Activated CD8-positive, alpha-beta T cell treated with anti-CD3 and anti-CD28 coated beads, Interleukin-2, amount 10 ng/mL, durations not matched to agents 7 days and 5 days (primary cell): ENCODE measurements at regions of chr21 and their contacts with region 1.

Region 1: DNA sequence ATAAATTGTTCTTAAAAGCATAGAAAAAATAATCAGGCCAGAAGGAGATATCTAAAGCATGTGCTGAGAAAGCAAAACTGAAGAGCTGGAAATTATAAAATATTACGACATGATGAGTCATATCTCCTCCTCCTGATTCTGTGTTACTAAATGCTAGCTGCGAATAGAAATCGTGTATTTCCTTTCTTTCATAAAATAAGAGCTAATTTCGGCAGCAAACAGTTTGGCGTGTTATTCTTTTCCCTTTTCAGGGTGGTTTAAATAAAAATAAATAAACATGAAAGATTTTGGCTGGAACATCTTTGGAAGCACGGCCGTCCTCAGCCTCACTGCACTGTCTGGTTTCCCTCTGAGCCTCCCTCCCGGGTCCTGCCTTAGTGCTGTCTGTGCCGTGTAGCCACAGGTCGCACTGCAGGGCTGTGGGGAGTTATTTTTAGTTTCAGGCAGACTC is 56.0 kb downstream of the ADARB1 start:
- DNase-seq: no peak
- ATAC-seq: no peak
- H3K4me3 Mint-ChIP-seq: no peak overlapping the region
- H3K27ac Mint-ChIP-seq: no peak overlapping the region
- H3K4me1 Mint-ChIP-seq: peaks cover 21% of the 10 kb centered on the region
- H3K27me3 Mint-ChIP-seq: no peaks in the 10 kb centered on the region

Region 2: GRCh38 chr21:44949779-44950198 is 180.6 kb before region 1 on chr21:
- CTCF ChIA-PET with region 1: interaction called, 187 read pairs
- POLR2A ChIA-PET with region 1: interaction called, 4 read pairs
- DNase-seq: peak; percentile 87
- ATAC-seq: peak; percentile 92
- H3K4me3 Mint-ChIP-seq: no peak overlapping the region
- H3K27ac Mint-ChIP-seq: no peak overlapping the region
- H3K4me1 Mint-ChIP-seq: peaks cover 9% of the 10 kb centered on the region
- H3K27me3 Mint-ChIP-seq: no peaks in the 10 kb centered on the region

Region 3: DNA sequence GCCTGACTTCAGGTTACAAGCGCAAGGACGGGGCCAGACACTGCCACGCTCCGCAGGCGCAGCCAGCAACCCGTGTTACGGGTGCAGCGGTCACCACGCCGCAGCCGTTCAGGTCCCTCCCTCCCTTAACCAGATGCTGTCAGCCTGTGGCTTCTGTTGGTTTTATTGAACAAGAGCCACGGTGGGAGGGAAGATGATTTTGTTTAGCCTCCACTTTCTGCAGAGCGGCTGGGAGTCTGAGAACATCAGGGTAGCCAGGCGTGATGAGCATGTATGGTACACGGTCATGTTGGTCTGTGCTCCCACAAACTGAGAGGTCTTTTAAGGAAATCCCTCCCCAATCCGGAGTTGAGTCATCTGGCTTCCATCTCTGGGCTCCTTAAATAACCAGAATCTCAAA is 74.5 kb before region 1 on chr21:
- CTCF ChIA-PET with region 1: interaction called, 13 read pairs
- POLR2A ChIA-PET with region 1: interaction called, 3 read pairs
- DNase-seq: no peak
- ATAC-seq: no peak
- H3K4me3 Mint-ChIP-seq: no peak overlapping the region
- H3K27ac Mint-ChIP-seq: no peak overlapping the region
- H3K4me1 Mint-ChIP-seq: no peaks in the 10 kb centered on the region
- H3K27me3 Mint-ChIP-seq: peaks cover 27% of the 10 kb centered on the region

Region 4: GRCh38 chr21:45069711-45070542 is 60.4 kb before region 1 on chr21:
- CTCF ChIA-PET with region 1: interaction called, 12 read pairs
- POLR2A ChIA-PET with region 1: interaction called, 3 read pairs
- DNase-seq: no peak
- ATAC-seq: no peak
- H3K4me3 Mint-ChIP-seq: no peak overlapping the region
- H3K27ac Mint-ChIP-seq: no peak overlapping the region
- H3K4me1 Mint-ChIP-seq: peaks cover 6% of the 10 kb centered on the region
- H3K27me3 Mint-ChIP-seq: peaks cover 9% of the 10 kb centered on the region

Region 5: DNA sequence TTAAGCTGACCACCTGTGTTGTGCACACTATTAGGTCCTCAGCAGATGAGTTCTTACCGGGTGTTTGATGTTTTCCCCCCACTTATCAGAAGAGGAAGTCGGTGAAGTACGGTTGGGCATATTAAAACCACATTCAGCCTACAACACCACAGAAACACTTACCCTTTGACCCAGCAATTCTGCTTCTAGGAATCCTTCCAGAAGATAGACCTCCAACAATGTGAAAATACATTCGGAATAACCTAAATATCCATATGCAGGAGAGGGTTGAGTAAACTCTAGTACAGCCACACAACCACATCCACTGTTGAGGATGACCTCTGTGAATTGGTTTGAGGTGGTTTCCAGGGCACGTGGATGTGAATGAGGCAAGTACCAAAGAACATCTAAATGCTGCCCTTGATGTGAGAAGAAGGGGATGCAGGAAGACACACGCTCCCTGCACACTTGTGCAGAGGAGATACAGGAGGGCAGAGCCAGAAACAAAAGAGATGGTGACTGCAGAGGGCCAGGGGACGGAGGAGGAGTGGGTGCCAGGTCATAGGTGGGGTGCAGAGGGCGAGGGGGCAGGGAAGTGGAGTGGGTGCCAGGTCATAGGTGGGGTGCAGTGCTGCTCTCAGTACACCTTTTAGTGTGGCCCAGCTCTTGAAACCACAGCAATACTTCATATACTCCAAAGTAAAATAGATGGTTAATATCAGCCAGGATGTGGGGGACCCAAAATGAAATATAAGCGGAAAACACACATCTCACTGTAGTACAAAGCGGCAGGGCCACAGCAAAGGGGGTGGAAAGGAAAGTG is 43.1 kb before region 1 on chr21:
- CTCF ChIA-PET with region 1: interaction called, 10 read pairs
- POLR2A ChIA-PET with region 1: no interaction called
- DNase-seq: peak; percentile 72
- ATAC-seq: peak; percentile 59
- H3K4me3 Mint-ChIP-seq: peak overlapping the region; percentile 44
- H3K27ac Mint-ChIP-seq: peak overlapping the region; percentile 78
- H3K4me1 Mint-ChIP-seq: peaks cover 86% of the 10 kb centered on the region
- H3K27me3 Mint-ChIP-seq: no peaks in the 10 kb centered on the region

Region 6: GRCh38 chr21:45114072-45114471 is 16.3 kb before region 1 on chr21:
- CTCF ChIA-PET with region 1: interaction called, 80 read pairs
- POLR2A ChIA-PET with region 1: no interaction called
- DNase-seq: no peak
- ATAC-seq: no peak
- H3K4me3 Mint-ChIP-seq: no peak overlapping the region
- H3K27ac Mint-ChIP-seq: no peak overlapping the region
- H3K4me1 Mint-ChIP-seq: peaks cover 62% of the 10 kb centered on the region
- H3K27me3 Mint-ChIP-seq: no peaks in the 10 kb centered on the region

Region 7: DNA sequence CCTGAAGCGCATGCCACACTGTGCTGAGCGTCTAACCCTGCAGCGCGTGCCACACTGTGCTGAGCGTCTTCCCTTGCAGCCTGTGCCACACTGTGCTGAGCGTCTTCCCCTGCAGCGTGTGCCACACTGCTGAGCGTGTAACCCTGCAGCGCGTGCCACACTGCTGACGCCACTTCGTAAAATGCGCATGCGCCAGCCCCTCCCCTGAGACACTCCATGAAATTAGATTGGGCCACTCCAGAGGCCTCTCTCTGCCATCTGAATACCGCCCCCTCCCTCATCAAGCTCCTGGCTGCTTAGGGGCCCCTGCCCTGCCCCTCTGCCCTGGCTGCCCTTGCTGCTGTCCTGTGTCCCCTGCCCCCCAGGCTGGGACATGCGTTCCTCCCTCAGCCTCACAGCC is 72.5 kb after region 1 on chr21:
- CTCF ChIA-PET with region 1: no interaction called
- POLR2A ChIA-PET with region 1: no interaction called
- DNase-seq: no peak
- ATAC-seq: no peak
- H3K4me3 Mint-ChIP-seq: no peak overlapping the region
- H3K27ac Mint-ChIP-seq: no peak overlapping the region
- H3K4me1 Mint-ChIP-seq: peaks cover 18% of the 10 kb centered on the region
- H3K27me3 Mint-ChIP-seq: no peaks in the 10 kb centered on the region

Region 8: DNA sequence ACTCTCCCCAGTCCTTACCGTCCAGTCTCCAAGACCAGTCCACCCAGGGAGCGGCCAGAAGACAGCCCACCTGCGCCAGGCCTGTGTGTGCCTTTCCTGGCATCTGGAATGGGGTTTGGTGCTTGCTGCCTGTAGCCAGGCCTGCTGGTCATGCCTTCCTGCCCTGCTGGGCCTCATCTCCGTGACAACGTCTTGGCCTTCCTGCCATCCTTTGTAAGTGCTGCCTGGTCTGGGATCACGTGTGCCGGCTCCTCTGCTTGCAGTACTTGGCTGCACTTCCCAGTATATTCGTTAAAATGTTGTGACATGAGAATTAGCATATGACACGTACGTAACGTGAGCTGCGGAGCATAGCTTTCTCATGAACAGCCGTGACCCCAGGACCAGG is 705.9 kb after region 1 on chr21:
- CTCF ChIA-PET with region 1: no interaction called
- POLR2A ChIA-PET with region 1: no interaction called
- DNase-seq: no peak
- ATAC-seq: no peak
- H3K4me3 Mint-ChIP-seq: no peak overlapping the region
- H3K27ac Mint-ChIP-seq: no peak overlapping the region
- H3K4me1 Mint-ChIP-seq: no peaks in the 10 kb centered on the region
- H3K27me3 Mint-ChIP-seq: peaks cover 5% of the 10 kb centered on the region